ENCODE measurements at regions of chrX and their contacts with region 1.

Region 1: DNA sequence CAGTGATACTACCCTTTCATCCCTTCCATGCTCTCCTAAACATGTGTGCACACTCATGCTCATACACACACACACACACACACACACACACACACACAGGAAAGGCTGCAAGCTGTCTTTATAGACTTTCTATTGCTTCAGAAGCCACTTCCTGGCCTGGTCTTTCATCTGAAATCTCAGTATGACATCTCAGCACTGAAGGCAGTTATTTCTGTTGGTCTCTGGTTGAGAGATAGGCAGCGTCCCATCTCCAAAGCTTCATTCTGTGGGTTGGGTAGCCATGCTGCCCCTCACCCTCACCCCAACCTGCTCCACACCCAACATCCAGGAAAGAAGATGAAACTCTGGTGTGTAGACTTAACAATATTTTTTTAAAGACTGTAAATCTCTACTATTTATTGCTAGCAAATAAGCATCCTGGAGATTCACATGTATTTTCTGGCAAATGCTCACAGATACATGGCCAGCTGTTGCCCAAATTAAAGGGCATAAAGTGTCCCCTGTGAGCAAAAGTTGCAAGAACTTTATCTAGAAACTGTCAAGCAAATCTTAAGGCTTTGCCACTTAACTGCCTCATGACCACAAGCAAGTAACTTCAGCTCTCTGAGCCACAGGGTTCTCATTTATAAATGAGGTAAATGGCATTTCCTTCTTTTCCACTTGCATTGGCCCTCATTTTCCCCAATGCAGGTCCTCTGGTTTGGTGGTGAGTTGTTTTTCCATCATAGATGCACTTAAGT is 189.8 kb upstream of the AFF2 start:
- DNase-seq: no peak
- H3K4me3 ChIP-seq: no peak overlapping the region
- H3K27ac ChIP-seq: no peak overlapping the region
- H3K4me1 ChIP-seq: no peaks in the 10 kb centered on the region
- H3K27me3 ChIP-seq: no peaks in the 10 kb centered on the region
- CTCF ChIP-seq: no peak
- EP300 ChIP-seq: no peak
- POLR2A ChIP-seq: no peak

Region 2: DNA sequence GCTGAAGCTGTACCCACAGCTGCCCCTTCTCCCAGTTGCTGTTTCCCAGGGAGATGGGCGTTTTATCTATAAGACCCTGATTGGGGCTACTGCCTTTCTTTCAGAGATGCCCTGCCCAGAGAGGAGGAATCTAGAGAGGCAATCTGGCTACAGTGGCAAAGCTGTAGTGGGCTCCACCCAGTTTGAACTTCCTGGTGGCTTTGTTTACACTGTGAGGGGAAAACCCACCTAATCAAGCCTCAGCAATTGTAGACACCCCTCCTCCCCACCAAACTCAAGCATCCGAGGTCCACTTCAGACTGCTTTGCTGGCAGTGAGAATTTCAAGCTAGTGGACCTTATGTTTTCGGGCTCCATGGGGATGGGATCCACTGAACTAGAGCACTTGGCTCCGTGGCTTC is 50.6 kb before region 1 on chrX:
- intact Hi-C with region 1: loop called in 1 of 4 experiments (anchors 5 kb)
- DNase-seq: no peak
- H3K4me3 ChIP-seq: no peak overlapping the region
- H3K27ac ChIP-seq: no peak overlapping the region
- H3K4me1 ChIP-seq: no peaks in the 10 kb centered on the region
- H3K27me3 ChIP-seq: no peaks in the 10 kb centered on the region
- CTCF ChIP-seq: no peak
- EP300 ChIP-seq: no peak
- POLR2A ChIP-seq: no peak

Region 3: DNA sequence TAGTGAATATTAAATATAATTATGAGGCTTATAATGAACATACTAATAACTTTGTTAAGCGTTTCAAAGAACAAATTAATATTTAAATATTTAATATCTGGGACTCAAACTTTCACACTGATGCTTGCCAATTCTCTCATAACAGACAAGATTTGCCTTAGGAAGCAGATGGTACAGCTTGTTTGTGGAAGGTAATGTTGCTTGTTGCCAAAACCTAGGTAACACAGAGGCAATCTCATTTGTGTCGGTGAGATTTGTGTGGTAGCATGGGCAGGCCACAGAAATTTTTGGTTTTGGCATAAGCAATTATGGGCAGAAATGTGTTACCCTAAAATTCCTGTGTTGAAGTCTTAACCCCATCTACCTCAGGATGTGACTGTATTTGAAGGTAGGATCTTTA is 74.9 kb after region 1 on chrX:
- intact Hi-C with region 1: loop called in 1 of 4 experiments (anchors 2 kb)
- DNase-seq: no peak
- H3K4me3 ChIP-seq: no peak overlapping the region
- H3K27ac ChIP-seq: no peak overlapping the region
- H3K4me1 ChIP-seq: no peaks in the 10 kb centered on the region
- H3K27me3 ChIP-seq: no peaks in the 10 kb centered on the region
- CTCF ChIP-seq: no peak
- EP300 ChIP-seq: no peak
- POLR2A ChIP-seq: no peak